ENCODE measurements at regions of chr2 and their contacts with region 1.

Region 1: GRCh38 chr2:181552808-181553207 is 95.6 kb downstream of the ITGA4 start:
- DNase-seq: no peak
- H3K4me3 ChIP-seq: no peak overlapping the region
- H3K27ac ChIP-seq: no peak overlapping the region
- H3K4me1 ChIP-seq: no peaks in the 10 kb centered on the region
- CTCF ChIP-seq: no peak

Region 2: GRCh38 chr2:181077128-181077709 is 475.6 kb before region 1 on chr2:
- CTCF ChIA-PET with region 1: no interaction called
- POLR2A ChIA-PET with region 1: no interaction called
- intact Hi-C with region 1: loop called (anchors 10 kb)
- DNase-seq: peak; percentile 72
- H3K4me3 ChIP-seq: no peak overlapping the region
- H3K27ac ChIP-seq: no peak overlapping the region
- H3K4me1 ChIP-seq: no peaks in the 10 kb centered on the region
- CTCF ChIP-seq: peak; percentile 94

Region 3: GRCh38 chr2:181970160-181970794 is 417.5 kb after region 1 on chr2:
- CTCF ChIA-PET with region 1: no interaction called
- POLR2A ChIA-PET with region 1: no interaction called
- intact Hi-C with region 1: no loop called
- DNase-seq: no peak
- H3K4me3 ChIP-seq: no peak overlapping the region
- H3K27ac ChIP-seq: no peak overlapping the region
- H3K4me1 ChIP-seq: no peaks in the 10 kb centered on the region
- CTCF ChIP-seq: peak; percentile 54